ENCODE measurements at regions of chr12 and their contacts with region 1.

Region 1: GRCh38 chr12:64890873-64891468 is 66.5 kb downstream of the TBC1D30 start:
- DNase-seq: peak; percentile 88
- ATAC-seq: peak; percentile 16
- H3K4me3 ChIP-seq: no peak overlapping the region
- H3K27ac ChIP-seq: no peak overlapping the region
- H3K4me1 ChIP-seq: peaks cover 51% of the 10 kb centered on the region
- H3K27me3 ChIP-seq: no peaks in the 10 kb centered on the region
- CTCF ChIP-seq: peak; percentile 82

Region 2: DNA sequence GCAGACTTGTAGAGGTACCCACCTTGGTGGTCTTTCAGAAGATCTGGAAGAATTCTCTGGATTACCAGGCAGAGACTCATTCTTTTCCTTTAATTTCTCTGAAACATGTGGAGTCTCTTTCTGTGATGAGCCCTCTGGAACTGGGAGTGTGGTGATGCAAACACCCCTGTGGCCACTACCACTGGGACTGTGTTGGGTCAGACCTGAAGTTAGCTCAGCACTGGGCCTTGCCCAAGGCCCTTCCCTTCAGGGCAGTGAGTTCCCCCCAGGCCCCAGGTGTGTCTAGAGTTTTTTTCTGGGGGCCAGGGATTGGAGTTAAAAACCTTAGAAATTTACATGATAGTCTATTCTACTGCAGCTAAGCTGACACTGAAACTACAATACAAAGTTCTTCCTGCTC is 34.5 kb before region 1 on chr12:
- CTCF ChIA-PET with region 1: no interaction called
- POLR2A ChIA-PET with region 1: no interaction called
- intact Hi-C with region 1: no loop called
- DNase-seq: no peak
- ATAC-seq: no peak
- H3K4me3 ChIP-seq: no peak overlapping the region
- H3K27ac ChIP-seq: no peak overlapping the region
- H3K4me1 ChIP-seq: no peaks in the 10 kb centered on the region
- H3K27me3 ChIP-seq: no peaks in the 10 kb centered on the region
- CTCF ChIP-seq: no peak

Region 3: DNA sequence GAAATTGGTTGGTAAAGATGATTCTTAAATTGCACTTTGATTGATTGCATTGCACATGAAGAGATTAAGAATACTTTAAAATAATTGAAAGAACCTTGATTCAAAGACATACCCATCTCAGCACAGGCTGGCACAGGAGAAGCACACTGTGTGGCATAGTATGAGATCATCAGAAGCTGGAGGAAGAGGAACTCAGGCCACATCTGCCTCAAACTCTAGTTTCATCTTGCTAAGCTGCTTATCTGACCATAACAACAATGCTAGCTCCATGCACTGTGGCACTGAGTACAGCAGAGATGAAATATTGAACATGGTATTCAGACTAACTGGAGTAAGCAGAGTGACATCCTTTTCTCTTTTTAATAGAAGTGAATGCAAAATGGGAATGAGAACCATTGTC is 32.6 kb after region 1 on chr12:
- CTCF ChIA-PET with region 1: no interaction called
- POLR2A ChIA-PET with region 1: no interaction called
- intact Hi-C with region 1: no loop called
- DNase-seq: no peak
- ATAC-seq: no peak
- H3K4me3 ChIP-seq: no peak overlapping the region
- H3K27ac ChIP-seq: no peak overlapping the region
- H3K4me1 ChIP-seq: no peaks in the 10 kb centered on the region
- H3K27me3 ChIP-seq: no peaks in the 10 kb centered on the region
- CTCF ChIP-seq: no peak

Region 4: GRCh38 chr12:64968989-64969735 is 78.2 kb after region 1 on chr12:
- CTCF ChIA-PET with region 1: no interaction called
- POLR2A ChIA-PET with region 1: no interaction called
- intact Hi-C with region 1: loop called (anchors 1 kb)
- DNase-seq: peak; percentile 77
- ATAC-seq: peak; percentile 96
- H3K4me3 ChIP-seq: peak overlapping the region; percentile 33; the same call in 1 of the 2 replicates
- H3K27ac ChIP-seq: peak overlapping the region; percentile 60
- H3K4me1 ChIP-seq: peaks cover 13% of the 10 kb centered on the region
- H3K27me3 ChIP-seq: no peaks in the 10 kb centered on the region
- CTCF ChIP-seq: no peak

Region 5: GRCh38 chr12:65100140-65100539 is 209.2 kb after region 1 on chr12:
- CTCF ChIA-PET with region 1: no interaction called
- POLR2A ChIA-PET with region 1: no interaction called
- intact Hi-C with region 1: loop called (anchors 1 kb)
- DNase-seq: peak; percentile 59
- ATAC-seq: peak; percentile 60
- H3K4me3 ChIP-seq: no peak overlapping the region
- H3K27ac ChIP-seq: no peak overlapping the region
- H3K4me1 ChIP-seq: no peaks in the 10 kb centered on the region
- H3K27me3 ChIP-seq: no peaks in the 10 kb centered on the region
- CTCF ChIP-seq: peak; percentile 77

Region 6: DNA sequence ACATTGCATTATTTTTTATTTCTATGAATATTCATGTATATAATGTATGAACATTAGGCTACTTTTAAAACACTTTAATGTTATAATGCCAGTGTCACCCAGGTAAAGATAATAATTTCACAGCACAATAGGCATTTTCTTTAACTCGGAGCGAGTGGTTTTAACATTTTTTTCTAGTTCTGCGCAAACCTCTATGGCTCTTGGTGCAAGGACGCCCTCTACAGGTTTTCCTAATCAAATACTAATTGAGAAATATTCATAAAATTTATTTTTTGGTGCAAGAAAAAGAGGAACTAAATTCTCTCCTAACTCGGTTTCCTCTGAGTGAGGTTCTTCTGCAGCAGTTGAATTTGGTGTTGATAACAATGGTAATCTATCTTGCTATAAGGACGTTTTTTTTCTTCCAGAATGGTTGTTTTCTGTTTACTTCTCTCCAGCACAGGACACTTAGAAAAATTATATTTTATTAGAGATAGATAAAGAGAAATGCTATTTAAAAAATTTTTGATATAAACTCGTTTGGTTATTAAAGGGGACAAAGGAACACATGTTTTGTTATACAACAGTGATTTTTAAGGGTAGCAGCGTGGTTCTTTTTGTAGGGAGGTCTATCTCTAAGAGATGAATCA is 232.6 kb after region 1 on chr12:
- CTCF ChIA-PET with region 1: no interaction called
- POLR2A ChIA-PET with region 1: no interaction called
- intact Hi-C with region 1: loop called (anchors 1 kb)
- DNase-seq: peak; percentile 66
- ATAC-seq: no peak; the same call in 1 of the 2 replicates
- H3K4me3 ChIP-seq: no peak overlapping the region
- H3K27ac ChIP-seq: no peak overlapping the region
- H3K4me1 ChIP-seq: peaks cover 7% of the 10 kb centered on the region
- H3K27me3 ChIP-seq: peaks cover 51% of the 10 kb centered on the region
- CTCF ChIP-seq: peak; percentile 86

Region 7: GRCh38 chr12:65279369-65280112 is 388.6 kb after region 1 on chr12:
- CTCF ChIA-PET with region 1: no interaction called
- POLR2A ChIA-PET with region 1: no interaction called
- intact Hi-C with region 1: loop called (anchors 5 kb)
- DNase-seq: no peak
- ATAC-seq: peak; percentile 2; the same call in 1 of the 2 replicates
- H3K4me3 ChIP-seq: peak overlapping the region; percentile 91
- H3K27ac ChIP-seq: no peak overlapping the region
- H3K4me1 ChIP-seq: peaks cover 5% of the 10 kb centered on the region; the same call in 1 of the 2 replicates
- H3K27me3 ChIP-seq: no peaks in the 10 kb centered on the region
- CTCF ChIP-seq: no peak